ENCODE measurements at regions of chr18 and their contacts with region 1.

Region 1: GRCh38 chr18:72672364-72673184 is 128.4 kb upstream of the CBLN2 start:
- DNase-seq: no peak
- ATAC-seq: peak; percentile 43
- H3K4me3 ChIP-seq: no peak overlapping the region
- H3K27ac ChIP-seq: no peak overlapping the region
- H3K4me1 ChIP-seq: peaks cover 24% of the 10 kb centered on the region
- H3K27me3 ChIP-seq: no peaks in the 10 kb centered on the region
- CTCF ChIP-seq: peak; percentile 71 to 76 (median 73)
- EP300 ChIP-seq: no peak
- POLR2A ChIP-seq: no peak
- RAD21 ChIP-seq: peak; percentile 89

Region 2: DNA sequence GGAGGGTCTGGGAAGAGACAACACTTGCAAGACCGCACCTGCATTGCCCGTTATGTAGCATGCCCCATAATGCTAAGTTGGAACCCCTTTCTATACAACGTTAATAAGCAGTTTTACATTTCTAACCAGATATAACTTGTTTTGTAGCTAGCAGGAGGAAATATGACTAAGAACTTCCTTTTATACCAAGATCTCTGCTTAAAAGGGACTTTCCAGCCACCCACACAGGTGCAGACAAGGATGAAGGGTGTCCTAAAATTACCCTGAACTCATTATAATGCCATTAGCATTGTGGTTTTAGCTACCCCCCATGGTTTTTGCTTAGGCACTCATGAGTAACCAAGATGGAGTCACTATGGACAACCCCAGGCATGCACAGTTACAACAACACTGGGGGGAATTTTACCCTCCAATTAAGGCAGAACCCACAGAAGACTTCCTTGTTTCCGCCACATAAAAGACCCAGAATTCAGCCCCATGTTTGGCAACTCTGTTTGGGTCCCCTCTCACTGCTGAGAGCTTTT is 491.3 kb before region 1 on chr18:
- CTCF ChIA-PET with region 1: no interaction called
- POLR2A ChIA-PET with region 1: no interaction called
- RAD21 ChIA-PET with region 1: no interaction called
- SMC1A ChIA-PET with region 1: no interaction called
- in situ Hi-C with region 1: no loop called
- intact Hi-C with region 1: loop called (anchors 10 kb)
- DNase-seq: peak; percentile 13
- ATAC-seq: peak; percentile 66
- H3K4me3 ChIP-seq: no peak overlapping the region
- H3K27ac ChIP-seq: no peak overlapping the region
- H3K4me1 ChIP-seq: no peaks in the 10 kb centered on the region
- H3K27me3 ChIP-seq: no peaks in the 10 kb centered on the region
- CTCF ChIP-seq: no peak
- EP300 ChIP-seq: no peak
- POLR2A ChIP-seq: no peak
- RAD21 ChIP-seq: no peak

Region 3: DNA sequence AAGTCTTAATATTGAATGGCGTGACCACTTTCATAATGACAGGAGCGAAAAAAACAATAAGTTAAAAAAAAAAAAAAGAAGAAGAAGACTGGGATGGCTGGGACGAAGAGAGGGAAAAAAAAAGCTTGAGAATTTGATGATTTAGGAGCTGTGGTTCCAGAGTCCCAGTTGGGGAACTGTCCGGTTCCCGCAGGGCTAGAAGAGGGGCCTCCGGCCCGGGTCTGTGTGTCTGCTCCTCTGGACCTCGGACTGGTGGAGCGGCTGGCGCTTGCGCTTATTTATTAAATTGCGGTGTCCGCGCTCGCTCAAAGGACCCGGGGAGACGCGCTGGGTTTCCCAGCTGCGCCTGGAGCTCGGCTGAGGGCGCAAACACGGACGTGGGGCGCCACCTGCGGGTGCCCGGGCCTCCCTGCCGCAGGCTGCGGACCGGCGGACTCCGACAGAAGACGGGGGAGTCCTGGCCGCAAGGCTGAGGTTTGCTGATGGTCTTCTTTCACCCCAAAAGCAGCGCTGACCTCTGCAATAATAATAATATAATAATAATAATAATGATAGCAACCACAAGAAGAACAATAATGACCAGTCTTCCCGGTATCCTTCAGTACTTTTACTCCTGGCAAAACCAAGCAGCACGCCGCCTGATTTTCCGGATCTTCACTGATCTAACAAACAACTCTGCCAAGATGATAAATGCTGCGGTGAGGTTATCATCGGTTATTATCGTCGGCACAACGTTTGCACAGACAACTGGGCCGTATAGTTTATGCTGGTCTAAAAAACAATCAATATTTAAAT is 128.3 kb before region 1 on chr18 and contains the start of gene CBLN2:
- CTCF ChIA-PET with region 1: interaction called, 7 read pairs
- POLR2A ChIA-PET with region 1: no interaction called
- RAD21 ChIA-PET with region 1: no interaction called
- SMC1A ChIA-PET with region 1: interaction called, 3 read pairs
- in situ Hi-C with region 1: no loop called
- intact Hi-C with region 1: loop called (anchors 5 kb)
- DNase-seq: no peak
- ATAC-seq: peak; percentile 97
- H3K4me3 ChIP-seq: no peak within 1 kb of the TSS
- H3K27ac ChIP-seq: no peak within 1 kb of the TSS
- H3K4me1 ChIP-seq: no peaks in the 10 kb centered on the region
- H3K27me3 ChIP-seq: peaks cover 0 to 3% of the 10 kb centered on the region in 2 experiments; a peak in 2 of 4 replicates
- CTCF ChIP-seq: peak; percentile 54 to 80 (median 76)
- EP300 ChIP-seq: no peak
- POLR2A ChIP-seq: no peak
- RAD21 ChIP-seq: peak; percentile 76
- polyA plus RNA-seq, gene CBLN2: 0.11 TPM in 1 of 2 experiments, not detected in the other

Region 4: DNA sequence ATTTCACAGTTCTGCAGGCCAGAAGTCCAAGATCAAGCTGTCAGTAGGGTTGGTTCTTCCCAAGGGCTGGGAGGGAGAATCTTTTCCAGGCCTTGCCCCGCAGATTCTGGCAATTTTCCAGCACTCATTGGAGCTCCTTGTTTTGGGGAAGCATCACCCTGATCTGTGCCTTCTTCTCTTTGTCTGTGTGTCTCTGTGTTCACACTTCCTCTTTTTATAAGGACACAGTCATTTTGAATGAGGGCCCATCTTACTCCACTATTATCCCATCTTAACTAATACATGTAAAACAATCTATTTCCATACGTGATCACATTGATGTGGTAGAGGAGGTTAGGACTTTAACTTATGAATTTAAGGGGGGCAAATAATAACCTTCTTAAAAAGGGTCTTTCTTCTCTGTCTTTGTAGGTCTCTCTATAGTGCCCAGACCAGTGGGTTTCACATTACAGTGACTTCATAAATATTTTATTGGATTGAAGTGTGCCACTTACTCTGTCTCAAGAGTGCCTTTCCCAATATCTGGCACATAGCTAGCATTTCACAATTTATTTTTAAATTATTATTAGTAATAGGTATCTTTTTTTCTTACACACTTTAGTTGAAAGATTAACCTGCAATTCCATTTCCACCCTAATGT is 59.6 kb before region 1 on chr18:
- CTCF ChIA-PET with region 1: no interaction called
- POLR2A ChIA-PET with region 1: no interaction called
- RAD21 ChIA-PET with region 1: no interaction called
- SMC1A ChIA-PET with region 1: no interaction called
- in situ Hi-C with region 1: no loop called
- intact Hi-C with region 1: no loop called
- DNase-seq: no peak
- ATAC-seq: peak; percentile 65; the same call in 2 of the 3 replicates
- H3K4me3 ChIP-seq: no peak overlapping the region
- H3K27ac ChIP-seq: no peak overlapping the region
- H3K4me1 ChIP-seq: no peaks in the 10 kb centered on the region
- H3K27me3 ChIP-seq: no peaks in the 10 kb centered on the region
- CTCF ChIP-seq: no peak
- EP300 ChIP-seq: no peak
- POLR2A ChIP-seq: no peak
- RAD21 ChIP-seq: no peak

Region 5: DNA sequence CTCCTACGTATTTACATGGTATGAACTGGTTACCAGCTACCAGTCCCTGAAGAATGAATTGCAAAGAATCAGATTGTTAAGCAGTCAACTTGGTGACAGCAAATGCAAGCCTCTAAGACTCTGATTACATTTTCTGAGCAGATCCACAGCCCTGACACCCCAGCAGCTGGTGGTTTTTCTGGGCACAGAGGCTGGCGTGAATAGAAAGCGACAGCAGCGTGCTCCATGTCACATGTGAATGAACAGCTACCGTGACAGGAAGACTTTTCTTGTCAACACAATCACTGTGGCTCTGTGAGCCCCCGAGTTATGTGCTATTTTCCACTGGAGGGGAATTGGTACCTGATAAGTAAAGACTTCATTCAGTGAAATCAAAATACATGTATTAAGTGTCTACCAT is 35.3 kb before region 1 on chr18:
- CTCF ChIA-PET with region 1: interaction called, 15 read pairs
- POLR2A ChIA-PET with region 1: no interaction called
- RAD21 ChIA-PET with region 1: interaction called, 6 read pairs
- SMC1A ChIA-PET with region 1: no interaction called
- in situ Hi-C with region 1: no loop called
- intact Hi-C with region 1: no loop called
- DNase-seq: no peak
- ATAC-seq: peak; percentile 74
- H3K4me3 ChIP-seq: no peak overlapping the region
- H3K27ac ChIP-seq: no peak overlapping the region
- H3K4me1 ChIP-seq: no peaks in the 10 kb centered on the region
- H3K27me3 ChIP-seq: no peaks in the 10 kb centered on the region
- CTCF ChIP-seq: no peak
- EP300 ChIP-seq: no peak
- POLR2A ChIP-seq: no peak
- RAD21 ChIP-seq: no peak

Region 6: DNA sequence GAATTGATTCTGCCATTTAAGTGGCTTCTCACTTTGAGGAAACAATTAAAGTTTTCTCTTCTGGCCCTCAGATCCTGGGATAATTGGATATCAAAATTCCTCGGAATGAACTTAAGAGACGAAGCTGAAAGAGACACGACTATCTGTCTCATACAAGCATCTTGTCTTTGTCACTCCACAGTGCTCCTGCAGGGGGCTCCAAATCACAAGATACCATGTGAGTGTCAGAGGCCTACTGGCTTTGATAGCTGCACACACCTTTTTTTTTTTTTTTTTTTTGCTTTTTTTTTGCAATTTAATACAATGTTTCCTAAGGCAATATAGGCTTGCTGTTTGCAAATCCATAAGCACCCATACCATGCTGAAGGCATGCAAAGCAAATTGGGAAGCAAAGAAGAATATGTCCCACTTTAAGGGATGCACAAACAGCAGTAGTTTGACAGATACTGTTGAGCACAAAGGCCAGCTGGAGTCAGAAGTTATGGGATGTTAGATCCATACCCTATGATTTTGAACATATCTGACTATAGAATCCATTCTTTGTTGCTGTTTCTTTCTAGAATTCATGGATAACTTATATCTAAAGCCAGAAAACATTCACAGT is 19.5 kb before region 1 on chr18:
- CTCF ChIA-PET with region 1: interaction called, 52 read pairs
- POLR2A ChIA-PET with region 1: no interaction called
- RAD21 ChIA-PET with region 1: interaction called, 36 read pairs
- SMC1A ChIA-PET with region 1: interaction called, 39 read pairs
- in situ Hi-C with region 1: no loop called
- intact Hi-C with region 1: loop called (anchors 1 kb)
- DNase-seq: no peak
- ATAC-seq: peak; percentile 99
- H3K4me3 ChIP-seq: no peak overlapping the region
- H3K27ac ChIP-seq: no peak overlapping the region
- H3K4me1 ChIP-seq: no peaks in the 10 kb centered on the region
- H3K27me3 ChIP-seq: no peaks in the 10 kb centered on the region
- CTCF ChIP-seq: peak; percentile 71 to 84 (median 73)
- EP300 ChIP-seq: no peak
- POLR2A ChIP-seq: no peak
- RAD21 ChIP-seq: peak; percentile 82

Region 7: DNA sequence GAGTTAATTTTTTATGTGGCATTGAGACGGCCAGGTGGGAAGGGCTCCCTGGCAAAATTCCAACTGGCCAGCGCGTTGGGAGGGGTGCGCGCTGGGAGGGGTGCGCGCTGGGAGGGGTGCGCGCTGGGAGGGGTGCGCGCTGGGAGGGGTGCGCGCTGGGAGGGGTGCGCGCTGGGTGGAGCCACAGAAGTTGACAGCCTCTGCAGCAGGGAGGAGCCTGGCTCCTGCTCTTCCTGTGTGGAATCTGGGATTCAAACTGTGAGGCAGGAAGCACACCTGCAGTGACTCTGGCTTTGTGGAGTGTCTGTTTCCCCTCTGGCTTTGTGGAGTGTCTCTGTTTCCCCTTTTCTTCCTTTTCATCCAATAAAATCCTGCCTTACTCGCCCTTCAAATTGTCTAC is 19.5 kb after region 1 on chr18:
- CTCF ChIA-PET with region 1: interaction called, 4 read pairs
- POLR2A ChIA-PET with region 1: no interaction called
- RAD21 ChIA-PET with region 1: no interaction called
- SMC1A ChIA-PET with region 1: interaction called, 11 read pairs
- in situ Hi-C with region 1: no loop called
- intact Hi-C with region 1: no loop called
- DNase-seq: no peak
- ATAC-seq: no peak
- H3K4me3 ChIP-seq: no peak overlapping the region
- H3K27ac ChIP-seq: no peak overlapping the region
- H3K4me1 ChIP-seq: no peaks in the 10 kb centered on the region
- H3K27me3 ChIP-seq: no peaks in the 10 kb centered on the region
- CTCF ChIP-seq: no peak
- EP300 ChIP-seq: no peak
- POLR2A ChIP-seq: no peak
- RAD21 ChIP-seq: no peak

Measured in GM12878 (cell line).